ENCODE measurements at regions of chr11 and their contacts with region 1.

Region 1: GRCh38 chr11:36105743-36106581 is 162.1 kb downstream of the LDLRAD3 start:
- DNase-seq: peak in 1 of 4 experiments; percentile 49
- ATAC-seq: peak; percentile 2
- H3K4me3 ChIP-seq: peak overlapping the region; percentile 26
- H3K27ac ChIP-seq: peak overlapping the region; percentile 98
- H3K4me1 ChIP-seq: peaks cover 40 to 72% of the 10 kb centered on the region in 2 experiments
- H3K27me3 ChIP-seq: no peaks in the 10 kb centered on the region
- CTCF ChIP-seq: no peak
- EP300 ChIP-seq: no peak
- POLR2A ChIP-seq: no peak
- RAD21 ChIP-seq: no peak

Region 2: DNA sequence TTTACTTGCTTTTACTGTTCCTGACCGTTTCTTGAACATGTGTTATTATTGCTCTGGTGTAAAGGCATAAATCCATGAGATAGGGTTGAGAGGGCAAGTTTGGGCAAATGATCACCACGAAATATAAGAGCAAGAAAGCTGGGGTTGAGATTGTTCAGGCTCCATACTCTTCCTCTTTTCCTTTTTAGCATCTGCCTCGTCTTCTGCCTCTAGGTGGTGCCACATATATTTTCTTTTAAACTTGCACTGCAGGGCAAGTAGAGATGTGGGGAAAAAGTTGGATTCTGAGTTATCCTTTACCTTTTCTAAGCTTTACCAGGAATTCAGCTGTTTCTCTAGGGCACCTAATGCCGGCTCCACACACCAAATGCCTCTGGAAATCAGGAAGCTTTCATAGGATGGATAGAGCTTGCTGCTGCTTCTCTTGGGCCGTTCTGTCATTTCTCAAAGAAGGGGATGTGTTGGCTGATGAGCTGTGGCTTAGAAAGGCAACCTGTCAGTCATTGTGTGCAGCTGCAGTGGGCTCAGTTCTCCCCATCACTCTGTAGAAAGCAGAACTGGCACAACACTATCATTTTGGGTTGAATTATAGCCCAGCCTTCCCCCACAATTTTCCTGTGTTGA is 63.9 kb before region 1 on chr11:
- CTCF ChIA-PET with region 1: no interaction called
- POLR2A ChIA-PET with region 1: no interaction called
- in situ Hi-C with region 1: no loop called
- intact Hi-C with region 1: loop called (anchors 2 kb)
- DNase-seq: peak in 3 of 4 experiments; percentile 15 to 53 (median 30)
- ATAC-seq: peak; percentile 86
- H3K4me3 ChIP-seq: no peak overlapping the region
- H3K27ac ChIP-seq: no peak overlapping the region
- H3K4me1 ChIP-seq: no peaks in the 10 kb centered on the region
- H3K27me3 ChIP-seq: no peaks in the 10 kb centered on the region
- CTCF ChIP-seq: peak; percentile 51 to 73 (median 54); a peak in 5 of 6 replicates
- EP300 ChIP-seq: no peak
- POLR2A ChIP-seq: no peak
- RAD21 ChIP-seq: peak; percentile 82 to 85

Region 3: DNA sequence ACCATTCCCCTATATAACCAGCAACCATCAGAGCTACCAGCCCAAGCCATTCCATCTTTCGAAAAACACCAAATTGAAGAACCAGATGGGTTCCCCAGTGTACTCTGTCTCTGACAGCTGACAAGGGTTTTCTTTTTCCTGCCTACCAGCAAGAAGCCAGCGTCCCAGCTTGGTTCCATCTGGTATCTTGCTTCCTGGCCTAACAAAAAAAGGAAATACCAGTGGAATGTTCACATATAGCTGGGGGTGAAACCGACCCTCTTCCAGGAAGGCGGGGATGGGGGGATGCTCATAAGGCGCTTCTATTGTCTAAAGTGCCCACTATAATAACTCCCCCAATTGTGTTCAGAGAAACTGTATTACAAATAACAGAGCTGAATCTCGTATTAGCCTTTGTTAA is 10.2 kb after region 1 on chr11:
- CTCF ChIA-PET with region 1: no interaction called
- POLR2A ChIA-PET with region 1: interaction called, 15 read pairs
- in situ Hi-C with region 1: no loop called
- intact Hi-C with region 1: no loop called
- DNase-seq: no peak
- ATAC-seq: no peak
- H3K4me3 ChIP-seq: no peak overlapping the region
- H3K27ac ChIP-seq: peak overlapping the region; percentile 62; the same call in 1 of the 3 replicates
- H3K4me1 ChIP-seq: peaks cover 4 to 17% of the 10 kb centered on the region in 2 experiments; a peak in 3 of 5 replicates
- H3K27me3 ChIP-seq: no peaks in the 10 kb centered on the region
- CTCF ChIP-seq: no peak
- EP300 ChIP-seq: no peak
- POLR2A ChIP-seq: no peak
- RAD21 ChIP-seq: no peak

Region 4: GRCh38 chr11:36249246-36249645 is 143.3 kb after region 1 on chr11:
- CTCF ChIA-PET with region 1: no interaction called
- POLR2A ChIA-PET with region 1: no interaction called
- in situ Hi-C with region 1: no loop called
- intact Hi-C with region 1: no loop called
- DNase-seq: no peak
- ATAC-seq: no peak
- H3K4me3 ChIP-seq: no peak overlapping the region
- H3K27ac ChIP-seq: no peak overlapping the region
- H3K4me1 ChIP-seq: no peaks in the 10 kb centered on the region
- H3K27me3 ChIP-seq: 0 out of 5 replicates have a peak, but pooled peaks cover 0 to 2% of the 10 kb centered on the region in 2 experiments
- CTCF ChIP-seq: no peak
- EP300 ChIP-seq: no peak
- POLR2A ChIP-seq: no peak
- RAD21 ChIP-seq: no peak

Region 5: GRCh38 chr11:36724742-36725385 is 618.9 kb after region 1 on chr11:
- CTCF ChIA-PET with region 1: no interaction called
- POLR2A ChIA-PET with region 1: no interaction called
- in situ Hi-C with region 1: no loop called
- intact Hi-C with region 1: no loop called
- DNase-seq: no peak
- ATAC-seq: no peak
- H3K4me3 ChIP-seq: no peak overlapping the region
- H3K27ac ChIP-seq: no peak overlapping the region
- H3K4me1 ChIP-seq: no peaks in the 10 kb centered on the region
- H3K27me3 ChIP-seq: no peaks in the 10 kb centered on the region
- CTCF ChIP-seq: no peak
- EP300 ChIP-seq: no peak
- POLR2A ChIP-seq: no peak
- RAD21 ChIP-seq: no peak

Measured in K562 (cell line).